Natural killer cell (primary cell): ENCODE measurements at regions of chr9 and their contacts with region 1.

Region 1: DNA sequence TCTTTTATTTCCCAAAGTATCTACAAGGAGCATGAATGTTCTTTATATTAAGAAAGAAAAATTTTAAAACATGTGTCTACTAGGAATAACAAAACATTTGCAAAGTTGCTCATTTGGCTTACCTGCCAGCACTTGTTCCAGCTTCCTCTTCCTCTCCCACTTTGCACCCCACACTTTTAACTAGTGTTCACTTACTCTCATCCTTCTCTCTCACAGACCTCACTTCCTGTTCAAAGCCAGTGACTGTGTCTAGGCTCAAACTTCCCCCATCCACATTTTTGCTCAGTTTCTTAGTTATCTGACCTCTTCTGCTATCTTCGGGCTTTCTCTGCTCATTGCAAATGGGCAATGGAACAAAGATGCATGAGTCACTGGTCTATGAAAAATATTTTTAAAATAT is 512.2 kb upstream of the ZNF462 start:
- DNase-seq: no peak
- ATAC-seq: no peak
- H3K4me3 ChIP-seq: no peak overlapping the region
- H3K4me3 Mint-ChIP-seq: no peak overlapping the region
- H3K27ac ChIP-seq: no peak overlapping the region
- H3K27ac Mint-ChIP-seq: no peak overlapping the region
- H3K4me1 ChIP-seq: no peaks in the 10 kb centered on the region
- H3K4me1 Mint-ChIP-seq: peaks cover 16 to 17% of the 10 kb centered on the region in 2 donors
- H3K27me3 ChIP-seq: no peaks in the 10 kb centered on the region
- H3K27me3 Mint-ChIP-seq: no peaks in the 10 kb centered on the region
- CTCF ChIP-seq: no peak

Region 2: GRCh38 chr9:106403081-106403480 is 52.3 kb after region 1 on chr9:
- intact Hi-C with region 1: loop called (anchors 10 kb)
- DNase-seq: no peak
- ATAC-seq: no peak
- H3K4me3 ChIP-seq: no peak overlapping the region
- H3K4me3 Mint-ChIP-seq: no peak overlapping the region
- H3K27ac ChIP-seq: no peak overlapping the region
- H3K27ac Mint-ChIP-seq: no peak overlapping the region
- H3K4me1 ChIP-seq: no peaks in the 10 kb centered on the region
- H3K4me1 Mint-ChIP-seq: peaks cover 0 to 8% of the 10 kb centered on the region in 2 donors
- H3K27me3 ChIP-seq: no peaks in the 10 kb centered on the region
- H3K27me3 Mint-ChIP-seq: no peaks in the 10 kb centered on the region
- CTCF ChIP-seq: no peak